Activated naive CD4-positive, alpha-beta T cell treated with anti-CD3 and anti-CD28 coated beads for 36 hours (primary cell): ENCODE measurements at regions of chr13 and their contacts with region 1.

Region 1: DNA sequence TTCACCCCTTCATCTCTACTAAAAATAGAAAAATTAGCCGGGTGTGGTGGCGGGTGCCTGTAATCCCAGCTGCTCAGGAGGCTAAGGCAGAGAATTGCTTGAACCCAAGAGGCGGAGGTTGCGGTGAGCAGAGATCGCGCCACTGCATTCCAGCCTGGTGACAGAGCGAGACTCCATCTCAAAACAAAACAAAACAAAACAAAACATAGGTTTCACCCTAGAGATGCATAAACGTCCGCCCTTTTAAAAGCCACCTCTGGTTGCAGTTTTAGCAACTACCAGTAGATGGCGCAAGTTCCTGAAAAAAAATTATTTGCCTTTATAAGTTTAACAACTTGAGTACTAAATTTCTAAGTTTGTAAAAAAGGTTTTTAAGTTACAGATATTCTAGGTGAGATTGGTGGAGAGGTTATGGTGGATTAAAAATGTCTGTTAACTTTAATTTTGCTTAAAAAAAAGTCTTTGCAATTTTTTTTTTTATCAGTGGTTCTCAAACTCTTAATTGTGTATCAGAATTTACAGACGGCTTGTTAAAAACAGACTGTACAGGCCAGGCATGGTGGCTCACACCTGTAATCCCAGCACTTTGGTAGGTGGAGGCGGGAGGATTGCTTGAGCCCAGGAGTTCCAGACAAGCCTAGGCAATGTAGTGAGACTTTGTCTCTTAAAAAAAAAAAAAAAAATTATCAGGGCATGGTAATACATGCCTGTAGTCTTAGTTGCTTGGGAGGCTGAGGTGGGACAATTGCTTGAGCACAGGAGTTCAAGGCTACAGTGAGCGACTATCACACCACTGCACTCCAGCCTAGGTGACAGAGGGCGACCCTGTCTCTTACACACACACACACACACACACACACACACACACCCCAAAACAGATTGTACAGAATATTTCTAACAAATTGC is 42.1 kb downstream of the NAA16 start:
- DNase-seq: peak; percentile 69
- H3K4me3 Mint-ChIP-seq: no peak overlapping the region
- H3K27ac Mint-ChIP-seq: peak overlapping the region; percentile 77
- H3K4me1 Mint-ChIP-seq: peaks cover 57% of the 10 kb centered on the region
- H3K27me3 Mint-ChIP-seq: no peaks in the 10 kb centered on the region

Region 2: GRCh38 chr13:41263261-41264027 is 89.7 kb before region 1 on chr13 and contains the start of gene MTRF1:
- CTCF ChIA-PET with region 1: no interaction called
- intact Hi-C with region 1: loop called (anchors 5 kb)
- DNase-seq: peak; percentile 84
- H3K4me3 Mint-ChIP-seq: peak within 1 kb of the TSS; percentile 90
- H3K27ac Mint-ChIP-seq: peak within 1 kb of the TSS; percentile 95
- H3K4me1 Mint-ChIP-seq: peaks cover 24% of the 10 kb centered on the region
- H3K27me3 Mint-ChIP-seq: no peaks in the 10 kb centered on the region
- total RNA-seq, gene MTRF1: 23.2 to 28.4 TPM

Region 3: GRCh38 chr13:41384755-41385503 is 31.7 kb after region 1 on chr13:
- CTCF ChIA-PET with region 1: no interaction called
- intact Hi-C with region 1: loop called (anchors 1 kb)
- DNase-seq: no peak
- H3K4me3 Mint-ChIP-seq: no peak overlapping the region
- H3K27ac Mint-ChIP-seq: no peak overlapping the region
- H3K4me1 Mint-ChIP-seq: peaks cover 24% of the 10 kb centered on the region
- H3K27me3 Mint-ChIP-seq: no peaks in the 10 kb centered on the region

Region 4: GRCh38 chr13:41492404-41493260 is 139.4 kb after region 1 on chr13:
- CTCF ChIA-PET with region 1: no interaction called
- intact Hi-C with region 1: loop called (anchors 2 kb)
- DNase-seq: peak; percentile 62
- H3K4me3 Mint-ChIP-seq: peak overlapping the region; percentile 45
- H3K27ac Mint-ChIP-seq: peak overlapping the region; percentile 95
- H3K4me1 Mint-ChIP-seq: peaks cover 91% of the 10 kb centered on the region
- H3K27me3 Mint-ChIP-seq: no peaks in the 10 kb centered on the region

Region 5: DNA sequence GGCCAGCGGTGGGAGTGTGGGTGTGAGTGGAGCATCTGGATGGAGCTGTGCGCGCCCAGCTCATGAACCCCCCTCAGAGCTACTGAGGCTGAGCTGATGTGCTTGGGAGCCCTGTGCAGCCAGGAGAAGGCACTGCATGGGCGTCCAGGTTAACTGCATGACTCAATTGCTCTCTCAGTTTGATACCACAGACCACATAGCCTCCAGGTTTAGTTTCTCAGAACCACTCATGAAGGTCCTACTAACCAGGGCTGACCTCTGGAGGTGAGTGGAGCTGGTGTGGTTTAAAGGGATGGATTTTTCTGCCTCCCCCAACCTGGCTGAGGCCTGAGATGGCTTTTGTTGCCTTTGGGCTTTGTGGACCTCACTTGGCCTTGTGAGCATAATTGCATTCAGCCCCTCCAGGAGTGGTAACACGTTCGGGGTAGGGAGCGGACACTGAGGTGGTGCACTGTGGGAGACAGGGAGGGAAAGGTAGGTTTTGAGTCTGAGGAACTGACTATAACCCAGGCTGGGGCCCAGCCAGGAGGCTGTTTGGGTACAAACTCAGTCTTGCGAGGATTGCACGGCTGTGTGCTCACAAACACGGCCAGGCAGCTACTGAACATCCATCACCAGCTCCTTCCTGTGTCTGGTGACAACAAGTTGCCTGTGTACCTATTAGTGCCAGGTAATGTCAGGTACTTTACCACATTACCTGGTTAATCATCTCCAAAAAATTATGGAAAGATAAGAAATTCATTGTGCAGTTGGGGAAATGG is 201.6 kb after region 1 on chr13:
- CTCF ChIA-PET with region 1: no interaction called
- intact Hi-C with region 1: loop called (anchors 1 kb)
- DNase-seq: peak; percentile 41
- H3K4me3 Mint-ChIP-seq: no peak overlapping the region
- H3K27ac Mint-ChIP-seq: no peak overlapping the region
- H3K4me1 Mint-ChIP-seq: peaks cover 6% of the 10 kb centered on the region
- H3K27me3 Mint-ChIP-seq: no peaks in the 10 kb centered on the region

Region 6: GRCh38 chr13:41652727-41653361 is 299.7 kb after region 1 on chr13:
- CTCF ChIA-PET with region 1: interaction called, 4 read pairs
- intact Hi-C with region 1: loop called (anchors 1 kb)
- DNase-seq: peak; percentile 66
- H3K4me3 Mint-ChIP-seq: no peak overlapping the region
- H3K27ac Mint-ChIP-seq: no peak overlapping the region
- H3K4me1 Mint-ChIP-seq: peaks cover 22% of the 10 kb centered on the region
- H3K27me3 Mint-ChIP-seq: no peaks in the 10 kb centered on the region

Region 7: DNA sequence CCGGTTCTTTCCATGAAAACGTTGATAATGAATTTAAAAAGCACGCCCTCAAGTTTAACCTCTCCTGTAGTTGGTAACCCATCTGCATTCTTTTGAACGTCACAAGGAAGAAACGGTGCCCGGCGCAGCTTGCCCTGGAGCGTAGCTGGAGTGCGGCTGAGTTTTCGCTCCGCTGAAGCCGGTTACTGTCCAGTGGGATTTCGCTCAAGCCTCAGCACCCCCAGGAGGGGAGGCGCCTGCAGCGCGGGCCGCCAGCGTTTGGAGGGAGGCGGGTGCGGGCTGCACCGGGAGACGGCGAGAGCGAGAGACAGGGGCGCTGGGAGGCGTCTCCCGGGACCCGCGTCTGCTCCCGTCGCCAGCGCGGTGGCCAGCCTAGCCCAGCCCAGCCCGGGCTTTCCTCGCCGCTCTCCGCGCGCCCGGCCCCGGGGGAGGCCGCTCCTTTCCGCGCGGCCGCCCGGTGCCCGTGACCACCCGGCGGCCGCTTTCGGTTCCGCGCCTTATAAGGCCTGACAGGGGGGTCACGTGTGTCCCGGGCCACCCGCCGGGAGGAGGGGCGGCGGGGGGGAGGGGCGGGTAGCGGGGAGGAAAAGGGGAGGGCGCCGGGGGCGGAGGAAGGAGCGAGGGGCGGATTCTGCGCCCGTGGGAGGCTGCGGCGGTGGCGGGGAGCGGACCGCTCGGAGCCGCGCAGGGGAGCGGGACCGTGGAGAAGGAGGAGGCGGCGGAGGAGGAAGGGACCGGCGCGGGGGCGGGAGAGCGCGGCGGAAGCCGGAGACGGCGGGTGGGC is 687.0 kb after region 1 on chr13:
- CTCF ChIA-PET with region 1: no interaction called
- intact Hi-C with region 1: loop called (anchors 10 kb)
- DNase-seq: peak; percentile 86
- H3K4me3 Mint-ChIP-seq: peak overlapping the region; percentile 78
- H3K27ac Mint-ChIP-seq: peak overlapping the region; percentile 73
- H3K4me1 Mint-ChIP-seq: peaks cover 20% of the 10 kb centered on the region
- H3K27me3 Mint-ChIP-seq: no peaks in the 10 kb centered on the region